PC-9 (cell line): ENCODE measurements at regions of chr12 and their contacts with region 1.

Region 1: DNA sequence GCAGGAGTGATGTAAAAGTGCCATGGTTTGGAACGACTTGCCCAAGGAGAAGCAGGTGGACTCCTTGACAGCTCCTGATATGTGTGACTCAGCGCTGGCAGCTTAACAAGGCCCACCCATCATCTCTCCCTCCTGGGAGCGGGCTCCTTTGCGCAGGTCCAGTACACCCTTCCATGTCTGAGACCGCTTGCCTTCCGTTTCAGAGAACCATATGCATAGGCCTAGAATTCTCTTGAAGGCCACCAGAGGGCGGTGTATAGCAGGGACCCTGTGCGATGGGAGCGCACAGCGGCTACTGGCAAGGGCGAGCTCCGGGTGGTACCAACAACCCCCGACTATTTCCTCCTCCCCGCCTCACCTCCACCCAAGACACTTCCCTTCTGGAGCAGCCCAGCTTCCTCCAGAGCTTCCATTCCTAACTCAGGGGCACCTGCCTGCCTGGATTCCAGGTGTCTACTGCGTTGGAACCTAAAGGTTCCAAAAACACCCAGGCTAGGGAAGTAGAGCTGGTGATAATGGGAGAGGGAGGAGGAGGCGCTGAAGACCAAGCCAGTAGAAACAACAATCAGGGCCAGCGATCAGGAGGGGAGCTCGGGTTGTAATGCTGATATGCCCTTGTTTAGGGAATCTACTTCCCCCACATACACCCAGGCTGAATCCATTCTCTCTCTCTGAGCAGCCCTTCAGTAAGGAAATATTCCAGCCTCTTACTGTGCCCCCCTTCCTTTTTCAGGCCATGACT is 6.2 kb downstream of the DHH start:
- DNase-seq: peak; percentile 90 to 92
- H3K4me3 ChIP-seq: peak overlapping the region; percentile 37; the same call in 1 of the 2 replicates
- H3K27ac ChIP-seq: no peak overlapping the region
- H3K4me1 ChIP-seq: peaks cover 25% of the 10 kb centered on the region
- H3K27me3 ChIP-seq: peaks cover 10% of the 10 kb centered on the region
- CTCF ChIP-seq: peak; percentile 86

Region 2: GRCh38 chr12:47650469-47650868 is 1437.9 kb before region 1 on chr12:
- CTCF ChIA-PET with region 1: no interaction called
- POLR2A ChIA-PET with region 1: no interaction called
- intact Hi-C with region 1: no loop called
- DNase-seq: no peak
- H3K4me3 ChIP-seq: no peak overlapping the region
- H3K27ac ChIP-seq: no peak overlapping the region
- H3K4me1 ChIP-seq: 0 out of 2 replicates have a peak, but pooled peaks cover 9% of the 10 kb centered on the region
- H3K27me3 ChIP-seq: no peaks in the 10 kb centered on the region
- CTCF ChIP-seq: no peak

Region 3: DNA sequence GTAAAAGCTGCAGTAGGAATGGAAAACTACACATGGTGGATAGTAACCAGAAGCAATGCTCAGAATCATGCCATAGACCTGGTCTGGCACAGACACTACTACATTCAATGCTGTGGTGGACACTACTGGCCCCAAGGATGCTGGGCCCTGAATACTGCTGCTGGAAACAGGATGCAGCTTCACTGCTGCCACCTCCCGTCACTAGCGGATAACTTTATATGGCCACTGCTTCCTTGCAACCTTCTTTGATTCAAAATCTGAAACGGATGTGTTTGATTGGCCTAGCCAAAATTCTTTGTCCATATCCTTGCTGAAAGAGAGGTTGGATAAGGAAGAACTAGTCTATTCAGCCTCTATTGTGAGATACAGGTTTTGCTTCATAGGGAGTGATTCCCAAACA is 330.1 kb before region 1 on chr12:
- CTCF ChIA-PET with region 1: no interaction called
- POLR2A ChIA-PET with region 1: no interaction called
- intact Hi-C with region 1: no loop called
- DNase-seq: no peak
- H3K4me3 ChIP-seq: no peak overlapping the region
- H3K27ac ChIP-seq: no peak overlapping the region
- H3K4me1 ChIP-seq: no peaks in the 10 kb centered on the region; the same call in 1 of the 2 replicates
- H3K27me3 ChIP-seq: no peaks in the 10 kb centered on the region
- CTCF ChIP-seq: no peak

Region 4: GRCh38 chr12:49060237-49061156 is 27.9 kb before region 1 on chr12 and contains the start of gene KMT2D:
- CTCF ChIA-PET with region 1: interaction called, 15 read pairs
- POLR2A ChIA-PET with region 1: no interaction called
- intact Hi-C with region 1: loop called (anchors 1 kb)
- DNase-seq: peak; percentile 72 to 87
- H3K4me3 ChIP-seq: peak within 1 kb of the TSS; percentile 87
- H3K27ac ChIP-seq: peak within 1 kb of the TSS; percentile 84
- H3K4me1 ChIP-seq: peaks cover 34% of the 10 kb centered on the region
- H3K27me3 ChIP-seq: no peaks in the 10 kb centered on the region
- CTCF ChIP-seq: no peak
- total RNA-seq, gene KMT2D: 94.0 and 97.9 TPM in 2 replicates

Region 5: GRCh38 chr12:49105608-49106007 is 17.2 kb after region 1 on chr12:
- CTCF ChIA-PET with region 1: interaction called, 26 read pairs
- POLR2A ChIA-PET with region 1: no interaction called
- intact Hi-C with region 1: no loop called
- DNase-seq: peak; percentile 76 to 89
- H3K4me3 ChIP-seq: peak overlapping the region; percentile 7; the same call in 1 of the 2 replicates
- H3K27ac ChIP-seq: peak overlapping the region; percentile 95
- H3K4me1 ChIP-seq: peaks cover 37% of the 10 kb centered on the region
- H3K27me3 ChIP-seq: no peaks in the 10 kb centered on the region
- CTCF ChIP-seq: no peak

Region 6: GRCh38 chr12:49121047-49121696 is 32.8 kb after region 1 on chr12:
- CTCF ChIA-PET with region 1: interaction called, 25 read pairs
- POLR2A ChIA-PET with region 1: interaction called, 3 read pairs
- intact Hi-C with region 1: loop called (anchors 1 kb)
- DNase-seq: peak in 1 of 2 experiments; percentile 75
- H3K4me3 ChIP-seq: no peak overlapping the region
- H3K27ac ChIP-seq: no peak overlapping the region
- H3K4me1 ChIP-seq: no peaks in the 10 kb centered on the region
- H3K27me3 ChIP-seq: no peaks in the 10 kb centered on the region
- CTCF ChIP-seq: peak; percentile 73

Region 7: GRCh38 chr12:49232940-49233841 is 144.8 kb after region 1 on chr12:
- CTCF ChIA-PET with region 1: interaction called, 15 read pairs
- POLR2A ChIA-PET with region 1: no interaction called
- intact Hi-C with region 1: loop called (anchors 2 kb)
- DNase-seq: no peak
- H3K4me3 ChIP-seq: no peak overlapping the region
- H3K27ac ChIP-seq: no peak overlapping the region
- H3K4me1 ChIP-seq: 0 out of 2 replicates have a peak, but pooled peaks cover 3% of the 10 kb centered on the region
- H3K27me3 ChIP-seq: no peaks in the 10 kb centered on the region
- CTCF ChIP-seq: no peak